ENCODE measurements at regions of chr1 and their contacts with region 1.

Region 1: GRCh38 chr1:198681831-198682759 is 43.3 kb downstream of the PTPRC start:
- DNase-seq: peak; percentile 94
- H3K4me3 ChIP-seq: peak overlapping the region in 2 of 3 experiments; percentile 2 to 24
- H3K27ac ChIP-seq: peak overlapping the region; percentile 80
- H3K4me1 ChIP-seq: peaks cover 8% of the 10 kb centered on the region
- H3K27me3 ChIP-seq: no peaks in the 10 kb centered on the region
- CTCF ChIP-seq: no peak

Region 2: GRCh38 chr1:197521118-197521739 is 1160.9 kb before region 1 on chr1:
- CTCF ChIA-PET with region 1: no interaction called
- dilution Hi-C with region 1: no loop called
- in situ Hi-C with region 1: loop called in 1 of 2 experiments (anchors 25 kb)
- intact Hi-C with region 1: loop called (anchors 5 kb)
- DNase-seq: peak; percentile 17
- H3K4me3 ChIP-seq: no peak overlapping the region
- H3K27ac ChIP-seq: no peak overlapping the region
- H3K4me1 ChIP-seq: no peaks in the 10 kb centered on the region
- H3K27me3 ChIP-seq: no peaks in the 10 kb centered on the region
- CTCF ChIP-seq: peak; percentile 67 to 69

Region 3: GRCh38 chr1:197526736-197527371 is 1155.2 kb before region 1 on chr1:
- CTCF ChIA-PET with region 1: no interaction called
- dilution Hi-C with region 1: no loop called
- in situ Hi-C with region 1: loop called in 1 of 2 experiments (anchors 25 kb)
- intact Hi-C with region 1: loop called (anchors 5 kb)
- DNase-seq: peak; percentile 2
- H3K4me3 ChIP-seq: no peak overlapping the region
- H3K27ac ChIP-seq: no peak overlapping the region
- H3K4me1 ChIP-seq: no peaks in the 10 kb centered on the region
- H3K27me3 ChIP-seq: no peaks in the 10 kb centered on the region
- CTCF ChIP-seq: peak; percentile 44 to 54

Region 4: DNA sequence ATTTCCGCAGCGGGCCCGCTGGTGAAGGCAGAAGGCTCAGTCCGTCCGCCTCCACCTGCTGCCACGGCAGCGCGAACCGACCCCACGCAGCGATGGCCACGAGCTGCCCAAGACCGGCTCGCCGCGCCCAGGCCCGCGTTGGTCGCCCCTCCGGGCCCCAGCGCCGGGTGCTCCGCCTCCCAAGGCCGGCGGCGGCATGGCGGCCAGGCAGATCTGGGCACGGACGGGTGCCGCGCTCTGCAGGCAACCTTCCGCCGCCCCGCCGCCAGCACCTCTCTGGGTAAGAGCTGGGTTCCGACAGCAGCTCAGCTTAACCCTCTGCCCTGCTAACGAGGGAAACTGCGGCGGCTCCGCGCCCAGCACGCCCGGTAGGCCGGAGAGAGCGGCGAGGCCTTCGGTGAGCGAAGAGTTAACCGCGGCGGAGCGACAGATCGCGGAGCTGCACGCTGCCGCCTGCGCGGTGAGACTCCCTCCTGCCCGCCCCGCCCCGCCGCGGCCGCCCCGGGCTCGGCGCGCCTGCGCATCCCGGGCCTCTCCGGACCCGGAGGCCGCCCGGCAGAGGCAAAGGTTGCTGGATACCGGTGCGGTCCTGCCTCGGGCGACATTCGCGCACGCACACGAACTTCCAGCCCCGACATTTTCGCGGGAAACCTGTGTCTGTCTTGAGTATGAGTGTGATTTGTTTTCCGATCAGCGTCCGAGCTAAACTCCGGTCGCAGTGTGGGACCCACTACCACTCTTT is 779.5 kb before region 1 on chr1 and contains the start of gene C1orf53:
- CTCF ChIA-PET with region 1: no interaction called
- dilution Hi-C with region 1: no loop called
- in situ Hi-C with region 1: loop called in 1 of 2 experiments (anchors 25 kb)
- intact Hi-C with region 1: no loop called
- DNase-seq: peak; percentile 88
- H3K4me3 ChIP-seq: peak within 1 kb of the TSS; percentile 71 to 85 (median 74)
- H3K27ac ChIP-seq: peak within 1 kb of the TSS; percentile 49
- H3K4me1 ChIP-seq: peaks cover 14% of the 10 kb centered on the region
- H3K27me3 ChIP-seq: peaks cover 1% of the 10 kb centered on the region
- CTCF ChIP-seq: no peak
- total RNA-seq, gene C1orf53: 3.2 to 4.2 TPM

Region 5: DNA sequence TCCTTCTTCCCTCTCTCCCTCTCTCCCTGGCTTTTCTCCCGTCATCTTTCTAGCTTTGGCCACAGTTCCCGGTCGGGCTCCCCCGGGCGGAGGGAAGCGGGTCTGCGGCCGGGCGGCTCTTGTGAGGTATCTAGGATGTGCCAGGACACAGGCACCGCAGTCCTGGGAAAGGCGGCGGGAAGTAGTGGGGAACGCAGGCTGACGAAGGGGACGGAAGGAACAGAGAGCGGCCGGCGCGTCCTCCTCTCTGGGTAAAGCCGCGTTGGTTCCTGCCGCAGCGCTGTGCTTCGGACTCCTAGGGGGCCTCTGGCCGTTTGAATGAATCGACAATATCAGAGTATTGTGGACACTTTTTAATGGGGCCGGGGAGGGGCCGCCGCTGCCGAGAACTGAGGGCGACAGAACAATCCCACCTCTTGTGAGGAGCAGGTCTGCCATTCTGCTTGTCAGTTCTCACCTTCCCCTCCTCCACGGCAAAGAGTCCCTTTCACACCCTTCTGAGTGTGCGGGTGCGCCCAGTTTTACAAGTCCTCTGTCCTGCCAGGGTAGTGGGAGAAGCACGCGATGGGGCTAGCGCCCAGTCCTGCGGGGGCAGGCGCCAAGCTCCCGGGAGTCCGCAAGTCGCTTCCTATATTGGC is 766.1 kb before region 1 on chr1:
- CTCF ChIA-PET with region 1: no interaction called
- dilution Hi-C with region 1: no loop called
- in situ Hi-C with region 1: loop called in 1 of 2 experiments (anchors 25 kb)
- intact Hi-C with region 1: loop called (anchors 10 kb)
- DNase-seq: peak; percentile 56
- H3K4me3 ChIP-seq: peak overlapping the region; percentile 18 to 44 (median 38)
- H3K27ac ChIP-seq: no peak overlapping the region
- H3K4me1 ChIP-seq: peaks cover 36% of the 10 kb centered on the region
- H3K27me3 ChIP-seq: peaks cover 85% of the 10 kb centered on the region
- CTCF ChIP-seq: peak; percentile 25 to 65

Region 6: DNA sequence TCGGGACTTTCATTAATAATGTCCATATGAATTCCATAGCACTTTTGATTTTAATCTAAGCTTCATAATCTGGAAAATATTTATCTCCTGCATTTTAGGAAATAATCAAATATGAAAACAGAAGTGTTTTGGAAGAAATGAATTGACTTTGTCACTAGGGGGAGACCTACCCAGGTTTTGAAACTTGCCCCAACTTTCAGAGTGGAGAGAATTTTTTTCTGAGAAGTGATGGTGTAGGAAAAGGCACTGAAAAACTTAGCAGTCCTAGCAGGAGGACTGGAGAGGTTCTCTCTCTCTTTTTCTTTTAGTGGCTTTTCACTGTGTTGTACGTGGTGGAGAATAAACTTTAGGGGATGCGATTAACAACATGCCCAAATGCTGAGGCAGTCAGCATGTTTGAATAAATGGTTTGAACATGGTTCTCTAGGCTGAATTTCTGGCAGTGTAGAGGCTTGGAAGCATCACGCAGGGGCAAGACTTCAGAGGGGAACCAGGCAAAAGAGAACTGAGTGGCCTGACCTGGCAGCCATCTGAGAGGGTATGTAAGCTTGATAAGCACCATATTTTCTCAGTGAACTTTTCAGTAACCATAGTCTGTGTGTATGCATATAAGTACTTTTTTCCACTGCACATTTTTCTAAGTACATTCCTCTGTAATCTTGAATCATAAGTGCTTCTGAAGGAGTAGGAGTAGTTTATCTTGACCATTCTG is 593.6 kb before region 1 on chr1:
- CTCF ChIA-PET with region 1: no interaction called
- dilution Hi-C with region 1: no loop called
- in situ Hi-C with region 1: loop called (anchors 25 kb)
- intact Hi-C with region 1: loop called (anchors 5 kb)
- DNase-seq: peak; percentile 45
- H3K4me3 ChIP-seq: no peak overlapping the region
- H3K27ac ChIP-seq: no peak overlapping the region
- H3K4me1 ChIP-seq: no peaks in the 10 kb centered on the region
- H3K27me3 ChIP-seq: no peaks in the 10 kb centered on the region
- CTCF ChIP-seq: peak; percentile 56 to 66

Region 7: DNA sequence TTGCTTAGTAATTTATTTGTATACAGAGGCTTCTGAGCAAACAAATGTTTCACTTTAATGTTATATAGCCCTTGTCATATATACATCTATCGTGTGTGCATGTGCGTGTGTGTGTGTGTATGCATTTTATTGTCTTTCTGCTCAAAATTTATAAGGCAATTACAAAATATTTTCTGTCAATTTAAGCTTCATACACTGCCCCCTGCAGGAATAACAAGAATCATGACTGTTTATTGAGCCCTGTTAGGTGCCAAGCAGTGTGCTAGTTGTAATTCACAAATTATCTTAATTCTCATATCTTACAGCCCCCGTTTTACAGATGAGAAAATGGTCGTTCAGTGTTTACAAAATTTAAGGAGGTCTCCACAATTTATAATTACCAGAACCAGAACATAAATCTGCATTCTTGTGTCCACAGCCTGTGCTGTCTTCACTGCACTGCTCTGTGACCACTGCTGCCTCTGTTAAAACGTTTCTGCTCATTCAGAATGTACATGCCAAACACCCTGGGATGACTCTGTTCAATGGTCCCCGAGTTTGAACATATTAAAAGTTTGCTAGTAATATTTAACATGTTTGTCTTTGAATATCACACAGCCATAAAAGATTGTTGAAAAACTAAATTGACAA is 323.0 kb before region 1 on chr1:
- CTCF ChIA-PET with region 1: no interaction called
- dilution Hi-C with region 1: no loop called
- in situ Hi-C with region 1: no loop called
- intact Hi-C with region 1: loop called (anchors 5 kb)
- DNase-seq: no peak
- H3K4me3 ChIP-seq: no peak overlapping the region
- H3K27ac ChIP-seq: no peak overlapping the region
- H3K4me1 ChIP-seq: no peaks in the 10 kb centered on the region
- H3K27me3 ChIP-seq: no peaks in the 10 kb centered on the region
- CTCF ChIP-seq: peak; percentile 44 to 47

Region 8: GRCh38 chr1:199041173-199041914 is 359.2 kb after region 1 on chr1:
- CTCF ChIA-PET with region 1: no interaction called
- dilution Hi-C with region 1: no loop called
- in situ Hi-C with region 1: no loop called
- intact Hi-C with region 1: no loop called
- DNase-seq: no peak
- H3K4me3 ChIP-seq: no peak overlapping the region
- H3K27ac ChIP-seq: no peak overlapping the region
- H3K4me1 ChIP-seq: no peaks in the 10 kb centered on the region
- H3K27me3 ChIP-seq: peaks cover 7% of the 10 kb centered on the region
- CTCF ChIP-seq: no peak